Dendritic cell treated with granulocyte-macrophage colony-stimulating factor and Interleukin-4, amounts not matched to agents 40 ng/mL and 50 ng/mL, for 4 days (primary cell): ENCODE measurements at regions of chr11 and their contacts with region 1.

Region 1: GRCh38 chr11:112289588-112290492 is 29.2 kb upstream of the PLET1 start:
- H3K4me3 Mint-ChIP-seq: peak overlapping the region; percentile 67
- H3K27ac Mint-ChIP-seq: peak overlapping the region; percentile 62
- H3K4me1 Mint-ChIP-seq: peaks cover 25% of the 10 kb centered on the region
- H3K27me3 Mint-ChIP-seq: peaks cover 7% of the 10 kb centered on the region

Region 2: DNA sequence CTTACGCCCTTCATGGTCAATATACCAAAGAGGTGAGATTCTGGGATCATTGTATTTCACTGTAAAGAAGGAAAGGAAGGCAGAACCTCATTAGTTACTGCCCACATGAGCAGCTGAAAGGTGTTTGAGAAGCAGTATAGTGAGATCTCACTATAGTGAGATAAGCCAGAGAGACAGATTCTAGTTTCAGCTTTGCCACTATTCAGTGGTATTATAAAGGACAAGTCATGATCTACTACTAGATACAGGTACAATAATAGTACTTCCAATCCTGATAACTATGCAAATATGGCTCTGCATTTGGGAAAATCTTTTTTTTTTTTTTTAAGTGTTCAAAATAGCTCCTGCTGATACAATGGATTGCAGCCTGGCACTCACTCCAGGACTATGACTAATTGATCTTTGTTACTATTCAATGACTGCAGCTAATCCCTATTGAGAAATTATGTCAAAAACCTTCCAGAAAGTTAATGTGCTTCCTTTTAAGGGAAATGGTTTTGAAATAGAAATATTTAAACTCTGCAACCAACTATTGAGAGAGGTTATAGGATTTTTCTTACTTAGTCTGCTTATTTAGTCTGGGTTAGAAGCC is 273.0 kb before region 1 on chr11:
- intact Hi-C with region 1: no loop called
- H3K4me3 Mint-ChIP-seq: no peak overlapping the region
- H3K27ac Mint-ChIP-seq: no peak overlapping the region
- H3K4me1 Mint-ChIP-seq: no peaks in the 10 kb centered on the region
- H3K27me3 Mint-ChIP-seq: no peaks in the 10 kb centered on the region

Region 3: GRCh38 chr11:112453601-112454577 is 164.0 kb after region 1 on chr11:
- intact Hi-C with region 1: loop called (anchors 5 kb)
- H3K4me3 Mint-ChIP-seq: no peak overlapping the region
- H3K27ac Mint-ChIP-seq: no peak overlapping the region
- H3K4me1 Mint-ChIP-seq: no peaks in the 10 kb centered on the region
- H3K27me3 Mint-ChIP-seq: no peaks in the 10 kb centered on the region

Region 4: GRCh38 chr11:112555491-112556364 is 265.9 kb after region 1 on chr11:
- intact Hi-C with region 1: loop called (anchors 1 kb)
- H3K4me3 Mint-ChIP-seq: no peak overlapping the region
- H3K27ac Mint-ChIP-seq: no peak overlapping the region
- H3K4me1 Mint-ChIP-seq: peaks cover 5% of the 10 kb centered on the region
- H3K27me3 Mint-ChIP-seq: peaks cover 1% of the 10 kb centered on the region

Region 5: DNA sequence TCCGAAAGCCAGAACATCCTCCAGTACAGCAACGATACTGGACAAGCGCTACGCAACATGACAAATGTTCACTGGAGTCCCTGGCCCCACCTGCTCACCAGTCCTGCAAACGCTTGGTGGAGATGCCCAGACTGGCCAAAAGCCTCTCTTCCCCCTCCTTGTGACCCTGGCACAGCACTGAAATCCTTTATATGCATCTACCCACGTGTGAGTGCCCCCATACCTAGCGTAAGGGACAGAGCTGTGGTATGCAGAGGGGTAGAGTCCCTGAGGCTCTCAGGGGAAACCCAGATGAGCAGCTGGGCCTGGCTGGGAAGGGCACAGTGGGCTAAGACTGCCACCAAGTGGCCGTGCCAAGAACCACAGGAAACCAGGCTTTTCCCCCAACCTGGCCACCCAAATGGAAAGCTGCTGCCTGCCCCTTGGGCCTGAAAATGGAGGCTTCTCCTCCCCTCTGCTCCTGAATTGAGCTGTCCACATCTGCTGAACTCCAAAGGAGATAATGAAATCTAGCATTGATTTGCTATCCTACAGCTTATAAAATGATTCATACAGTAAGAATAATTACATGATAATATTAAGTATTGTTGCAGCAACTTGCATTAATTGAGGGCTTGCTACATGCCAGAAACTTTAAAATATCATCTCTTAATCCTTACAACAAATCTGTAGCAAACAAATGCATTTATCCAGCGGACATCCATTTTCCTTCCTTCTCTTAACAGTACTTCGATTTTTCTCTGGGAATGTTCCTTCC is 999.8 kb after region 1 on chr11:
- intact Hi-C with region 1: loop called (anchors 2 kb)
- H3K4me3 Mint-ChIP-seq: no peak overlapping the region
- H3K27ac Mint-ChIP-seq: no peak overlapping the region
- H3K4me1 Mint-ChIP-seq: no peaks in the 10 kb centered on the region
- H3K27me3 Mint-ChIP-seq: peaks cover 4% of the 10 kb centered on the region